ENCODE measurements at regions of chr1 and their contacts with region 1.

Region 1: DNA sequence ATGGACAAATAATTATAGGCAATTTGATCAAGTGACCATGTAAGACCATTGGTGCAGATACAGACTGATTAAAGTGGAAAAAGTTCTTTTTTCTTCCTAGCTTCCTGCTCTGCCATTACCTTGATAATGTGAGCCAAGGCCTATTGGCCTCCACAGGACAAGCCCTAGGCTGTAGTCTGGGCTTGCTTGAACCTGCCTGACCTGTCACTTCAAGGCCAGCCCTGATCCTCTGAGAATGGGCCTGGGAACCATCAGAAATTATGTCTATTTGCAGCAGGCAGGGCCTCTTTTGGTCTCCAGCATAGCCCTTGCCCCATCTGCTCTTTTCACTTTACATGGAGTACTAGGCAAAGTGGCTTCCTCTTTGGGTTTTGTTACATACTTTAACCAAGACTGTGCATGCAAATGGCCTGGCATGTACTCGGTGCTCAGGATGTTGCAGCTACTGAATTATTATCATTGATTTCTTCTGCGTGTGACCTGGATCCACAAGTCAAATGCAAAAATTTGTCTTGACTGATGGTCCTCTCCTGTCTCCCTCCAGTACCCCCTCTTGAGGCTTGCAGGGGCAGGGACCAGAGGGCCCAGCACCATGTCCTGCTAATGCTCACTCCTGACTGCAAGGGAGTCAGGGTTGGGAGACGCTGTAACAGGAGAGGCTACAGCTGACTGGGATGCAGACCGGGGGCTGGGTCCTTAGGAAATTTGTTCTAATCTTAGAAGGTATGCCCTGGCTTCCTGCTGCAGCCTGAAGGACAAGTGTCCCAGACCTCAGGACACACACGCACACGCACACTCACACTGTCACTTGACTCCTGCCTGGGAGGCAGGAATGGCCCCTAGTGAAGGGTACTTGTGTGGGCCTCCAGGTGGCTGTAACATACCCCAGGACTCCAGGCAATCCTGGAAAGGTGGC is 39.4 kb downstream of the RCSD1 start:
- DNase-seq: no peak
- ATAC-seq: no peak
- H3K4me3 ChIP-seq: no peak overlapping the region
- H3K27ac ChIP-seq: no peak overlapping the region
- H3K4me1 ChIP-seq: no peaks in the 10 kb centered on the region
- H3K27me3 ChIP-seq: no peaks in the 10 kb centered on the region
- CTCF ChIP-seq: no peak

Region 2: GRCh38 chr1:167737169-167737568 is 67.7 kb after region 1 on chr1:
- CTCF ChIA-PET with region 1: no interaction called
- POLR2A ChIA-PET with region 1: no interaction called
- in situ Hi-C with region 1: no loop called
- intact Hi-C with region 1: no loop called
- DNase-seq: no peak
- ATAC-seq: no peak
- H3K4me3 ChIP-seq: no peak overlapping the region
- H3K27ac ChIP-seq: no peak overlapping the region
- H3K4me1 ChIP-seq: 0 out of 2 replicates have a peak, but pooled peaks cover 2% of the 10 kb centered on the region
- H3K27me3 ChIP-seq: no peaks in the 10 kb centered on the region
- CTCF ChIP-seq: no peak

Region 3: GRCh38 chr1:168007691-168008090 is 338.2 kb after region 1 on chr1:
- CTCF ChIA-PET with region 1: no interaction called
- POLR2A ChIA-PET with region 1: interaction called, 15 read pairs
- in situ Hi-C with region 1: no loop called
- intact Hi-C with region 1: no loop called
- DNase-seq: no peak
- ATAC-seq: no peak
- H3K4me3 ChIP-seq: no peak overlapping the region
- H3K27ac ChIP-seq: no peak overlapping the region
- H3K4me1 ChIP-seq: no peaks in the 10 kb centered on the region; the same call in 1 of the 2 replicates
- H3K27me3 ChIP-seq: no peaks in the 10 kb centered on the region
- CTCF ChIP-seq: no peak